ENCODE measurements at regions of chr7 and their contacts with region 1.

Region 1: GRCh38 chr7:143008007-143008901 is 18.7 kb downstream of the OR9A2 start:
- DNase-seq: peak; percentile 41
- ATAC-seq: peak; percentile 98
- H3K4me3 ChIP-seq: no peak overlapping the region
- H3K27ac ChIP-seq: no peak overlapping the region
- H3K4me1 ChIP-seq: no peaks in the 10 kb centered on the region
- H3K27me3 ChIP-seq: no peaks in the 10 kb centered on the region; a peak in 1 of 5 replicates
- CTCF ChIP-seq: peak; percentile 93
- EP300 ChIP-seq: no peak
- POLR2A ChIP-seq: no peak
- RAD21 ChIP-seq: peak; percentile 84

Region 2: DNA sequence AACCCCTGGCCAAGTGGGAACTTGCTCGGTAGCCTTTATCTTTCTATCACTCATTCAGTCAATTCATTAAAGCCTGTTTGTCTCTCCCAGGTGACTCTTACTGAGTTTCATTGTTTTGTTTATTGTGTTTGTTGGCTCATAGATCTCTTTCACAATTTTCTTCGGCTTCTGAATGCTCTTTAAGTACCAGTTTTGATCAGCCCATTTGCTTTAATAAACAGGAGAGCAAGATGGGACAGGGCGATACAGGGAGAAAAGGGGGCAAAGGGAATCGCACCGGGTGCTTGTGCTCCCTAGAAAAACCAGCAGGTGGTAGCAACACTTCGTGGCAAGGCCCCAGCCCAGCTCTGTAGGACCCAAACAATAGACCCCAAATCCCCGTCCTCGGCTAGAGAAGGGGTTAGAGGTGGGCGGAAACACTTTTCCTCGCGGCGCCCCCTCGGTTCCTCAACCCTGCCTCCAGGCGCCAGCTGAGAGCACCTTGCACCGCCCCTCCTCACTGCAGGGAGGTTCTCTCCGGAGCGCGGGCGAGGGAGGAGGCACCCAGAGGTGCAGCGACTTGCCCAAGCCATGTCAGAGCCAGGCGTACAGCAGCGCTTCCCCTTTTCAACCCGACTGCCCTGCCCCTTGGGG is 154.4 kb before region 1 on chr7:
- CTCF ChIA-PET with region 1: interaction called, 6 read pairs
- POLR2A ChIA-PET with region 1: no interaction called
- in situ Hi-C with region 1: no loop called
- intact Hi-C with region 1: loop called (anchors 1 kb)
- DNase-seq: peak; percentile 33
- ATAC-seq: peak; percentile 87
- H3K4me3 ChIP-seq: peak overlapping the region; percentile 44 to 77 (median 70)
- H3K27ac ChIP-seq: no peak overlapping the region
- H3K4me1 ChIP-seq: no peaks in the 10 kb centered on the region
- H3K27me3 ChIP-seq: peaks cover 1 to 29% of the 10 kb centered on the region in 2 experiments; a peak in 3 of 5 replicates
- CTCF ChIP-seq: peak; percentile 77
- EP300 ChIP-seq: no peak
- POLR2A ChIP-seq: no peak
- RAD21 ChIP-seq: peak; percentile 45; the same call in 1 of the 2 replicates

Region 3: DNA sequence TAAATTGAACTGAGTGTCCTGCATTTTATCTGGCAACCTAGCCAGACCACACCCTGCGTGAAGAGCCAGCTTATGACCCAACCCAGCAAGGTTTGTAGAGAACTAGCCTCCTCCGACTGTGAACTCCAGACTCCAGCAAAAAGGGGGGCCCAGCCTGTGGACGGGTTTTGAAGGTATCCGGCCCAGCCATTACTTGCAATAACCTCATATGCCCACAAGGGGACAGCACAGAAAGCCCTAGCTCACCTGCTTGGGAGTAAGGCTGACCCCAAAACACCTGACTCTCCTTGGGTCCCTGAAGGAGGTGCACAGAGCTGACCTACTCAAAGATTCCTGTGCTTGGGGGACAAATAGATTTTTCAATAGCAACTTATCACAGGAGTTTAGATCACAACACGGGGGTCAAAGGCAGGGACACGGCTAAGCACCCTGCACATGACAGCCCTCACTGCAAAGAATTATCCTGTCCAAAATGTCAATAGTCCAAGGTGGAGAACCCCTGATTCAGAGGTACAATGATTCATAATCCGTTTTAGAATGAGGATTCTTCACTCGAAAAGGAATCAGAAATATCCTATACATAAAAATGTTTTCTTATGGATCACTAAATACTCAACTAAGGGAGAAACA is 127.3 kb before region 1 on chr7:
- CTCF ChIA-PET with region 1: no interaction called
- POLR2A ChIA-PET with region 1: no interaction called
- in situ Hi-C with region 1: no loop called
- intact Hi-C with region 1: loop called (anchors 10 kb)
- DNase-seq: peak; percentile 23
- ATAC-seq: peak; percentile 76
- H3K4me3 ChIP-seq: no peak overlapping the region
- H3K27ac ChIP-seq: no peak overlapping the region
- H3K4me1 ChIP-seq: no peaks in the 10 kb centered on the region
- H3K27me3 ChIP-seq: peaks cover 1 to 18% of the 10 kb centered on the region in 2 experiments; a peak in 3 of 5 replicates
- CTCF ChIP-seq: peak; percentile 55
- EP300 ChIP-seq: no peak
- POLR2A ChIP-seq: no peak
- RAD21 ChIP-seq: peak; percentile 24; the same call in 1 of the 2 replicates

Region 4: GRCh38 chr7:142960955-142961512 is 47.2 kb before region 1 on chr7:
- CTCF ChIA-PET with region 1: no interaction called
- POLR2A ChIA-PET with region 1: no interaction called
- in situ Hi-C with region 1: no loop called
- intact Hi-C with region 1: no loop called
- DNase-seq: no peak
- ATAC-seq: no peak
- H3K4me3 ChIP-seq: no peak overlapping the region
- H3K27ac ChIP-seq: no peak overlapping the region
- H3K4me1 ChIP-seq: no peaks in the 10 kb centered on the region
- H3K27me3 ChIP-seq: peaks cover 0 to 3% of the 10 kb centered on the region in 2 experiments; a peak in 1 of 5 replicates
- CTCF ChIP-seq: no peak
- EP300 ChIP-seq: no peak
- POLR2A ChIP-seq: no peak
- RAD21 ChIP-seq: no peak

Region 5: DNA sequence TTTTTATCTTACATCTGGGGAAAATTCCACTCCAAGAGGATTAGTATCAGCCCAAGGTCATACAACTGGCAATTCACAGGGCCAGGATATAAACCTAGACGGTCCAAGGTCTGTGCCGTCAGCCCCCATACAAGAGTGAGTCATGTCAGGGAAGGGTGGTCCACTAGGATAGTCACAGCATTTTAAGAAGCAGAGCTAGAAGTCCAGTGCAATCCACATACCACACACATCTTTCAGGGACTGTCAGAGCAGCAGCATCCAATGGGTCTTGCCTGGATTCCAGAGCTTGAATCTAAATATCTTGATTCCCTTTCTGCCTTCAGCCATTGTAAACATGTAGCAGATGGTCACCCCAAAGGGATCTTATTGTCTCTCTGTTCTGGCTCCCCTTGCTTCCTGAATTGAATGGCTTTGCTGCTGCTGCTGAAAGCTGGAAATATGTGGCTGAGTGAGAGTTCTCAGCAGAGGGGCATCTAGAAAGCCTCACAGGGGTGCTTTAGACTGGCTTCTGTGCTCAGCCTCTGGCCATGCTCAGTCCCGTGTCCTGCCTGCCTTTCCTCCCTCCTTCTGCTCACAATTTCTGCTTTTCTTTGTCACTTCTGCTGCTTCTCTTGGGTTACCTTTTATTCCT is 34.0 kb after region 1 on chr7:
- CTCF ChIA-PET with region 1: no interaction called
- POLR2A ChIA-PET with region 1: no interaction called
- in situ Hi-C with region 1: no loop called
- intact Hi-C with region 1: no loop called
- DNase-seq: peak; percentile 7
- ATAC-seq: peak; percentile 82
- H3K4me3 ChIP-seq: no peak overlapping the region
- H3K27ac ChIP-seq: peak overlapping the region; percentile 54
- H3K4me1 ChIP-seq: peaks cover 23% of the 10 kb centered on the region
- H3K27me3 ChIP-seq: peaks cover 0 to 3% of the 10 kb centered on the region in 2 experiments; a peak in 3 of 5 replicates
- CTCF ChIP-seq: no peak
- EP300 ChIP-seq: no peak
- POLR2A ChIP-seq: no peak
- RAD21 ChIP-seq: no peak

Region 6: DNA sequence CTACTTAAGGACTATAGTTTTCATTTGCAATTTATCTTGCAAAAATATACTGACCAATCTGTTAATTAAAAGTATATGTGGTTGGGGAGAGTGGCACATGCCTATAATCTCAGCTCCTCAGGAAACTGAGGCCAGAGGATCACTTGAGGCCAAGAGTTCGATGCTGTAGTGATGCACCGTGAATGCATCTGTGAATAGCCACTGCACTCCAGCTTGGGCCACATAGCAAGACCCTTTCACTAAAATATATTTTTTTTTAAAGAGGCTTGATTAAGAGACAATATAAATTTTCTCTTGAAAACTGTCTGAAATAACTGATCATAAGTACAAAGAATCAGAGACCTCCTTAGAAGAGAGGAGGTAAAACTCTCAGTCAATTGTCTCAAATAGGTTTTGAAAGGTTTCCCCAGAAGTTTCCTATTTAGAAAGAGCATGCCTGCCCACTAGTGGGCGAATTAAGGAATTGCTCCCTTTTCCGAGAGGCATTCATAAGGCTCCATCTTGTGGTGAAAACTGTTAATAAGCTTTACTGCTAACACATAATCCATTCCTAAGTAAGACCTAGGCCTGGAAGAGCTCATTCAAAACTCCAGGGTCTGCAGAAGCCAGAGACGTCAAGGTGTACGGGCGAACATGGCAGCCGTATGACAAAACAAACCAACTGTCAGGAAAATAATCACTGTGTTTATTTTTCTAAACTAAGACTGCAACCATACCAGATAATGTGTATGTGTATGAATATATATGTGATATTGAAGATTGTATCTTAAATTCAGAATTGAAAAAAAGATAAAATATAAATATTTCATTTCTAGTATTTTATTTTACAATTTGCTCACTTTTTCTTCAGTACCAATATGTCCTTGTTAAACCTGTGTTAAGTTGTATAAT is 206.8 kb after region 1 on chr7:
- CTCF ChIA-PET with region 1: interaction called, 178 read pairs
- POLR2A ChIA-PET with region 1: no interaction called
- in situ Hi-C with region 1: loop called (anchors 5 kb)
- intact Hi-C with region 1: loop called (anchors 1 kb)
- DNase-seq: peak; percentile 80
- ATAC-seq: peak; percentile 91
- H3K4me3 ChIP-seq: no peak overlapping the region
- H3K27ac ChIP-seq: no peak overlapping the region
- H3K4me1 ChIP-seq: no peaks in the 10 kb centered on the region
- H3K27me3 ChIP-seq: 0 out of 5 replicates have a peak, but pooled peaks cover 0 to 3% of the 10 kb centered on the region in 2 experiments
- CTCF ChIP-seq: peak; percentile 95
- EP300 ChIP-seq: no peak
- POLR2A ChIP-seq: no peak
- RAD21 ChIP-seq: peak; percentile 92

Region 7: DNA sequence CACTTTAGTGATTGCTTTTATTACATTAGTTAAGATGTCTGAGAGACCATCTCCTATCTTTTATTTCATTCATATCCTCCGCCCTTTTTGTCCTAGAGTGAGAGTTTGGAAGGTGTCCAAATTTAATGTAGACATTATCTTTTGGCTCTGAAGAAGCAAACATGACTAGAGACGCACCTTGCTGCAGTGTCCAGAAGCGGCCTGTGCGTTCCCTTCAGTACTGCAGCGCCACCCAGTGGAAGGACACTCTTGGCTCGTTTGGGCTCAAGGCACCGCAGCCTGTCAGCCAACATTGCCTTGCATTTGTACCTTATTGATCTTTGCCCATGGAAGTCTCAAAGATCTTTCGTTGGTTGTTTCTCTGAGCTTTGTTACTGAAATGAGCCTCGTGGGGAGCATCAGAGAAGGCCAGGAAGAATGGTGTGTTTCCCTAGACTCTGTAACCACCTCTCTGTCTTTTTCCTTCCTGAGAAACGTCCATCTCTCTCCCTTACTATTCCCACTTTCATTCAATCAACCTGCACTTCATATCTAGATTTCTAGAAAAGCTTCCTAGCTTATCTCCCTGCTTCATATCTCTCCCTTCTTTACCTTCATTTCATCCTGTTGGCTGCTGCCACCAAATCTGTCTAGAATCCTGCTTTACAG is 297.3 kb after region 1 on chr7:
- CTCF ChIA-PET with region 1: no interaction called
- POLR2A ChIA-PET with region 1: no interaction called
- in situ Hi-C with region 1: no loop called
- intact Hi-C with region 1: loop called (anchors 10 kb)
- DNase-seq: peak; percentile 44
- ATAC-seq: peak; percentile 97
- H3K4me3 ChIP-seq: no peak overlapping the region
- H3K27ac ChIP-seq: no peak overlapping the region
- H3K4me1 ChIP-seq: no peaks in the 10 kb centered on the region
- H3K27me3 ChIP-seq: no peaks in the 10 kb centered on the region
- CTCF ChIP-seq: peak; percentile 87
- EP300 ChIP-seq: no peak
- POLR2A ChIP-seq: no peak
- RAD21 ChIP-seq: peak; percentile 73